ENCODE measurements at regions of chr11 and their contacts with region 1.

Region 1: DNA sequence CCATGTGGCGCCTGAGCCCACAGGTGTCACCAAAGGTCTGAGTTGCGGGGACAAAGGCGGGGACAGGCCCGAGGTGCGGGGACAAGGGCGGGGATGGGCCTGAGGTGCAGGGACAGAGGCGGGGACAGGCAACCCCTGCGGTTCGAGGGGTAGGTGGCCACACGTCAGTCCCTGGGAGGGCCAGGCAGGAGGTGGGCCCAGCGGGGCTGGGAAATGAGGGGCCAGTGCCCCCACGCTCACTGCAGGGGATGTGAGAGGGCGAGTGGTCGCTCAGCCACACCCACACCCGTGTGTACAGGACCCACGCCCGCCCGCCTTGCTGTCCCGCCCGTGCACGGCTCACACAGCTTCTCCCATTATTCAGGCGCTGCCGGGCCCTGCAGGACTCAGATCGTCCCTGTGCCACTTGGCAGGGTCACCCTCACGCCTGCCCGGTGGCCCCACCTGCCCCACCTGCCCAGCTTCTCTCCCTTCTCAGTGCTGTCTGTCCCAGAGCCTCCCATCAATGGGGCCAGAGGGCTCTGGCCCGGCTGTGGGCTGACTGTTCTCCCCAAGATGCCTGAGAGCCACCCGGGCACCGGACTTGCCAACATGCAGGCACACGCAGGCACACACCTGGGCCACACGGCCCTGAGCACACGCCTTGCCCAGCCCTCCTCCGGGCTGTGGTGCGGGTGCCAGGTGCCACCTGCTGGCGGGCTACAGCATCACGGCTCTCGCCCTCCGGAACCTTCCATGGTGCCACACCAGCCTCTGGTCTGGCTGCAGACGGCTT is 14.2 kb upstream of the MUC6 start:
- DNase-seq: peak; percentile 53 to 84 (median 76)
- H3K4me3 ChIP-seq: no peak overlapping the region
- H3K27ac ChIP-seq: no peak overlapping the region
- H3K4me1 ChIP-seq: no peaks in the 10 kb centered on the region
- H3K27me3 ChIP-seq: peaks cover 19% of the 10 kb centered on the region
- CTCF ChIP-seq: peak; percentile 84 to 98 (median 94)
- POLR2A ChIP-seq: no peak

Region 2: DNA sequence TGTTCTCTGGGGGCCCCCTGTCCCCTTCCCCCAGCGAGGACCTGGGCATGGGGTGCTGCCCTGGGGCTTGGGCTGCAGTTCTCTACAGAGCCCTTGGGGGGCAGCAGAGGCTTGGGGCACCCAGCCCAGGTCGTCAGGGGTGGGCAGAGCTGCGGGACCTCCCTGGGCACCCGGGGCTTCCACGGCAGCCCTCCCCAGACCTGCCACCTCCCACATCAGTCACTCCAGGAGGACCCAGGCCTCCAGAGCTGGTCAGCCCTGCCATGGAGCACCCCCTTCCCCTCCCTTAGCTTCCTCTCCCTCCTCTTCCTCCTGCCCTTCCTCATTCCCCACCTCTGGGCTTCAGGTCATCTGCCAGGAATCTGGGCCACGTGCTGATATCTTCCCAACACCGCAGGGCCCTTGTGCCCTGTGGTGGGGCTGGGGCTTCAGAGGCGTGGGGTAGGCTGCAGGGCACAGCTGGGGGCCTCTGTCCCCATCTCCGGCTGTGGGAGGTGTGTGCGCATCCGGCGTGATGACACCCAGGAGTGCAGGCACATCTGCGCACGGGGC is 202.3 kb before region 1 on chr11:
- intact Hi-C with region 1: loop called (anchors 2 to 5 kb)
- DNase-seq: peak in 3 of 7 donors; percentile 56 to 68 (median 59)
- H3K4me3 ChIP-seq: no peak overlapping the region
- H3K27ac ChIP-seq: no peak overlapping the region
- H3K4me1 ChIP-seq: peaks cover 26 to 32% of the 10 kb centered on the region in 2 donors
- H3K27me3 ChIP-seq: no peaks in the 10 kb centered on the region
- CTCF ChIP-seq: peak; percentile 77 to 87 (median 82)
- POLR2A ChIP-seq: no peak

Region 3: DNA sequence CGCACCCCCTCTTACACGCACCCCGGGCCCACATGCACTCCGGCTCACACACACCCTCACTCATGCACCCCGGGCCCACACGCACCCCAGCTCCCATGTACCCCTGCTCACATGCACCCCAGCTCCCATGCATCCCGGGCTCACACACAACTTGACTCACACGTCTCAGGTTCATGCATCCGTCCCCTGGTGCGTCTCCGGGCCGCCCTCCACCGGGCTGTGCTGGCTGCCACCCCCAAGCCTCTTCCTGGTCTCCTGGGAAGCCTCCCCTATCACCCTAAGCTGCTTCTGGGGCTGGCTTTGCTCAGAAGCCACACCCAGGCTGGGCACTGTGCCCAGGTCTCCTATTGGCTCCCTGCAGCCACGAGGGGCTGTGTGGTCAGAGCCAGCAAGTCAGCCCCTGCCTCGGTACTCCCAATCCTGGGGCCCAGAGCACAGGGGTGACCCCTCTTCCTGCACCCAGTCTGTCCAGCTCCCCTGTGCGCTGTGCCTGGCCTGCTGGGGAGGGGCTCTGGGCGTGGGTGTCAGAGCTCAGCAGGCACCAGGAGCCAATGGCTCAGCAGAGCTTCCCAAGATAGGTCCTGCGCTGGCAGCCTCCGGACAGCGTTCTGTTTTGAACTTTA is 191.1 kb before region 1 on chr11:
- intact Hi-C with region 1: loop called in 1 of 2 experiments (anchors 5 kb)
- DNase-seq: peak in 6 of 7 donors; percentile 76 to 90 (median 84)
- H3K4me3 ChIP-seq: no peak overlapping the region
- H3K27ac ChIP-seq: peak overlapping the region in 2 of 5 donors; percentile 41 to 59
- H3K4me1 ChIP-seq: peaks cover 0 to 19% of the 10 kb centered on the region in 2 donors
- H3K27me3 ChIP-seq: no peaks in the 10 kb centered on the region
- CTCF ChIP-seq: no peak
- POLR2A ChIP-seq: no peak

Region 4: GRCh38 chr11:897253-898142 is 153.3 kb before region 1 on chr11:
- intact Hi-C with region 1: loop called in 1 of 2 experiments (anchors 2 kb)
- DNase-seq: no peak
- H3K4me3 ChIP-seq: no peak overlapping the region
- H3K27ac ChIP-seq: no peak overlapping the region
- H3K4me1 ChIP-seq: no peaks in the 10 kb centered on the region
- H3K27me3 ChIP-seq: no peaks in the 10 kb centered on the region
- CTCF ChIP-seq: no peak
- POLR2A ChIP-seq: no peak

Region 5: GRCh38 chr11:1113405-1114201 is 62.8 kb after region 1 on chr11:
- intact Hi-C with region 1: no loop called
- DNase-seq: peak in 1 of 7 donors; percentile 6
- H3K4me3 ChIP-seq: no peak overlapping the region
- H3K27ac ChIP-seq: no peak overlapping the region
- H3K4me1 ChIP-seq: no peaks in the 10 kb centered on the region
- H3K27me3 ChIP-seq: peaks cover 3% of the 10 kb centered on the region
- CTCF ChIP-seq: no peak
- POLR2A ChIP-seq: no peak

Region 6: GRCh38 chr11:1138093-1138492 is 87.3 kb after region 1 on chr11:
- intact Hi-C with region 1: no loop called
- DNase-seq: no peak
- H3K4me3 ChIP-seq: no peak overlapping the region
- H3K27ac ChIP-seq: no peak overlapping the region
- H3K4me1 ChIP-seq: no peaks in the 10 kb centered on the region
- H3K27me3 ChIP-seq: no peaks in the 10 kb centered on the region
- CTCF ChIP-seq: no peak
- POLR2A ChIP-seq: no peak

Region 7: GRCh38 chr11:1260023-1260501 is 209.3 kb after region 1 on chr11:
- intact Hi-C with region 1: no loop called
- DNase-seq: peak in 1 of 7 donors; percentile 28
- H3K4me3 ChIP-seq: no peak overlapping the region
- H3K27ac ChIP-seq: no peak overlapping the region
- H3K4me1 ChIP-seq: peaks cover 10 to 12% of the 10 kb centered on the region in 2 donors
- H3K27me3 ChIP-seq: no peaks in the 10 kb centered on the region
- CTCF ChIP-seq: no peak
- POLR2A ChIP-seq: no peak